Dorsolateral prefrontal cortex (tissue), 120 donors: ENCODE measurements at regions of chr20 and their contacts with region 1.

Region 1: GRCh38 chr20:44909872-44910689 is at the start of gene PABPC1L:
- DNase-seq: peak in 5 of 10 donors; percentile 5 to 65 (median 19)
- H3K4me3 ChIP-seq: peak within 1 kb of the TSS; percentile 43 to 84 (median 68)
- H3K27ac ChIP-seq: peak within 1 kb of the TSS in 3 of 59 donors; percentile 15 to 53 (median 38)
- H3K27me3 ChIP-seq: no peaks in the 10 kb centered on the region
- CTCF ChIP-seq: no peak
- total RNA-seq, gene PABPC1L: 5.6 to 24.7 (median 14.3) TPM

Region 2: GRCh38 chr20:44954166-44954565 is 44.1 kb after region 1 on chr20:
- intact Hi-C with region 1: loop called in 1 of 2 experiments (anchors 5 kb)
- DNase-seq: no peak
- H3K4me3 ChIP-seq: no peak overlapping the region
- H3K27ac ChIP-seq: no peak overlapping the region
- H3K27me3 ChIP-seq: no peaks in the 10 kb centered on the region
- CTCF ChIP-seq: no peak

Region 3: GRCh38 chr20:44979090-44979621 is 69.1 kb after region 1 on chr20:
- intact Hi-C with region 1: no loop called
- DNase-seq: no peak
- H3K4me3 ChIP-seq: no peak overlapping the region
- H3K27ac ChIP-seq: peak overlapping the region in 48 of 59 donors; percentile 1 to 82 (median 46)
- H3K27me3 ChIP-seq: no peaks in the 10 kb centered on the region
- CTCF ChIP-seq: no peak

Region 4: DNA sequence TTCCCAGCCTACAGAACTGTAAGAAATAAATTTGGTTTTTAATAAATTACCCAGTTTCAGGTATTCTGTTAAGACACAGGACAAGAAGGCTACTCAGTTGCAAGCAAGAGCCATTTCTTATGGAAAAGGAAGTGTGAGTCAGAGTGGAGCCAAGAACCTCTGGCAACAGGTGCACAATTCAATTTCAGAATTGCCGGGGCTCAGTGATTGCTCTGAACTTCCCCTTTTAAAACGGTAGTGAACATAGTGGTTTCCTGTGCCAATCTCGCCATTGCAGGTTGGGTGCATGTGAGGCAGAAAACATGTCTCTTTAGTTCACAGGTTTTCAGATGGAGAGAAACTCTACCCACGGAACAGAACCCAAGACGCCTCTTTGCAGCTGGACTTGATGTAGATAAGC is 522.2 kb after region 1 on chr20:
- intact Hi-C with region 1: no loop called
- DNase-seq: no peak
- H3K4me3 ChIP-seq: no peak overlapping the region
- H3K27ac ChIP-seq: peak overlapping the region in 58 of 59 donors; percentile 50 to 100 (median 95)
- H3K27me3 ChIP-seq: no peaks in the 10 kb centered on the region
- CTCF ChIP-seq: no peak